ENCODE measurements at regions of chr1 and their contacts with region 1.

Region 1: DNA sequence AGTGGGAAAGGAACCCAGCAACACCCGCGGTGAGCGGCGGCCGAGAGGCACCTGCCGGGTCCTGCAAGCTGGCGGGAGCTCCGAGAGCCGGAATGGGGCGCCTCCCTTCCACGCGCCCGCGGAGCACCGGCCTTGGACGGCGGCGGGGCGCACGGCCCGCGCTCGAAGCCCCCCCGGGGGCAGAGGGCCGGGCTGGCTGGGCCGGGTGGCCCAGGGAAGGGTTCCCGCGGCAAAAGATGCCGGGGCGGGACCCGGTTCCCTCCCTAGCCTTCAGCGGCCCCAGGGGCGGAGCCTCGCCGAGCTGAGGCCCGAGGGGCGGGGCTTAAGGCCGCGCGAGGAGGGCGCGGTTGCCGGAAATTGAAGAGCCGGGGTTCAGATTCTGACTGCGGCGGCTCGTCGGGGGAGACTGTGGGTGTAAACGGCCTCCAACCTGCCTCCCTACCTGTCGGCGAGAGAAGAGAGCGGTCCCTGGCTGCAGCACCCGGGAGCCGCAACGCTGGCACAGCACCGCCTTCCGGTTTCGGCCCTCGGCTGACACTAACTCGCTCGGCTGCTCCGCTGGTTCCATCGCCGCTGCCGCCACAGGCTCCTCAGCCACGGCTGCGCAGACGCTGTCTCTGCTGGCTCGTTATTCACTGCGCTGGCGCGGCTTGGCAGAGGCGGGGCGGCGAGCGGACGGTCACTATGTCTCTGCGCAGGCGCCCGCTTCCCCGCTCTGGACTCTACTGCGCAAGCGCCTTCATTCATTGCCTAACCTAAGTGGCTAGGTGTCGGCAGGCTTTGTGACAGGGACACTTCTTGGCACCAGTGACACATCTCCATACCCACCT is at the start of gene RABIF:
- DNase-seq: peak; percentile 94
- ATAC-seq: peak; percentile 92
- H3K4me3 Mint-ChIP-seq: peak within 1 kb of the TSS; percentile 96
- H3K27ac Mint-ChIP-seq: peak within 1 kb of the TSS; percentile 98
- H3K4me1 Mint-ChIP-seq: peaks cover 16% of the 10 kb centered on the region
- H3K27me3 Mint-ChIP-seq: no peaks in the 10 kb centered on the region
- CTCF ChIP-seq: no peak
- total RNA-seq, gene RABIF: 10.7 and 13.2 TPM in 2 replicates

Region 2: GRCh38 chr1:201149400-201149799 is 1739.3 kb before region 1 on chr1:
- CTCF ChIA-PET with region 1: no interaction called
- POLR2A ChIA-PET with region 1: interaction called, 11 read pairs
- intact Hi-C with region 1: no loop called
- DNase-seq: no peak
- ATAC-seq: no peak
- H3K4me3 Mint-ChIP-seq: no peak overlapping the region
- H3K27ac Mint-ChIP-seq: no peak overlapping the region
- H3K4me1 Mint-ChIP-seq: peaks cover 11% of the 10 kb centered on the region
- H3K27me3 Mint-ChIP-seq: no peaks in the 10 kb centered on the region
- CTCF ChIP-seq: no peak

Region 3: GRCh38 chr1:202810615-202811295 is 78.0 kb before region 1 on chr1 and contains the start of gene PCAT6:
- CTCF ChIA-PET with region 1: no interaction called
- POLR2A ChIA-PET with region 1: interaction called, 10 read pairs
- intact Hi-C with region 1: loop called (anchors 1 kb)
- DNase-seq: peak; percentile 88
- ATAC-seq: peak; percentile 82
- H3K4me3 Mint-ChIP-seq: peak within 1 kb of the TSS; percentile 93
- H3K27ac Mint-ChIP-seq: peak within 1 kb of the TSS; percentile 80
- H3K4me1 Mint-ChIP-seq: peaks cover 36% of the 10 kb centered on the region
- H3K27me3 Mint-ChIP-seq: no peaks in the 10 kb centered on the region
- CTCF ChIP-seq: no peak
- total RNA-seq, gene PCAT6: 0.67 and 0.83 TPM in 2 replicates

Region 4: DNA sequence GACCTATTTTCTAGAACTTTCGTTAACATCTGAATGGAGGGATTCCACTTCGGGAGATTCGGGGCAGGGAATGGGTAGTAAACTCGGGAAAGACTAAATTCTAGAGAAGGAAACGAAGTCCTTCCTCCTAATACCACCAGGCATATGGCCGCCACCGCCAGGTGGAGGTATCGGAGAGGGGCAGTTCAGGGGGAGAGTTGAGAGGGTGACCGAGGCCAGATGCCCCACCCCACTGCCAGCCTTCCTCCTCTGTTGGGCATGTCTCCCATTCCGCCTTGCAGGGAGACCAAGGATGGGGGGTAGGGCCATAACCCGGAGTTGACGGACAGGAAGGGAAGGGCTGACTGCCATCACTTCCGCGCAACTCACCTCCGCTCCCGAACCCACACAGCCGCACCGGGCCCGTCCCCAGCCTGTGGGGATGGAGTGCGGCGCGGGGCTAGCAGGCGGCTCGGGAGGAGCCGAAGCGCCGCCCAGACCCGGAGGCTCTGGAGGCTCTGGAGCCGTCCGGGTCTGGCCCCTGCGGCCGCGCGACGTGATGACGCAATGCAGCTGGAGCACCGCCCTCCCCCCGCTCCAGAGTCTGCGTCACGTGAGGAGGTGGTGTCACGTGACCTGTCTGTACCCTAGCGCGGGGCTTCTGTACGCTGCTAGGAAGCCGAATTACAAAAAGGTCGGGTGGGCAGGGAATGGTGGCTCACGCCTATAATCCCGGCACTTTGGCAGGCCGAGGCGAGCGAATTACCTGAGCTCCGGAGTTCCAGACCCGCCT is 38.2 kb after region 1 on chr1 and contains the start of gene KLHL12:
- CTCF ChIA-PET with region 1: no interaction called
- POLR2A ChIA-PET with region 1: no interaction called
- intact Hi-C with region 1: loop called (anchors 1 kb)
- DNase-seq: peak; percentile 92
- ATAC-seq: peak; percentile 93
- H3K4me3 Mint-ChIP-seq: peak within 1 kb of the TSS; percentile 94
- H3K27ac Mint-ChIP-seq: peak within 1 kb of the TSS; percentile 92
- H3K4me1 Mint-ChIP-seq: peaks cover 24% of the 10 kb centered on the region
- H3K27me3 Mint-ChIP-seq: no peaks in the 10 kb centered on the region
- CTCF ChIP-seq: no peak
- total RNA-seq, gene KLHL12: 30.4 and 30.8 TPM in 2 replicates

Region 5: GRCh38 chr1:202945483-202945882 is 56.7 kb after region 1 on chr1:
- CTCF ChIA-PET with region 1: no interaction called
- POLR2A ChIA-PET with region 1: no interaction called
- intact Hi-C with region 1: no loop called
- DNase-seq: no peak
- ATAC-seq: no peak
- H3K4me3 Mint-ChIP-seq: no peak overlapping the region
- H3K27ac Mint-ChIP-seq: no peak overlapping the region
- H3K4me1 Mint-ChIP-seq: no peaks in the 10 kb centered on the region
- H3K27me3 Mint-ChIP-seq: no peaks in the 10 kb centered on the region
- CTCF ChIP-seq: no peak

Region 6: DNA sequence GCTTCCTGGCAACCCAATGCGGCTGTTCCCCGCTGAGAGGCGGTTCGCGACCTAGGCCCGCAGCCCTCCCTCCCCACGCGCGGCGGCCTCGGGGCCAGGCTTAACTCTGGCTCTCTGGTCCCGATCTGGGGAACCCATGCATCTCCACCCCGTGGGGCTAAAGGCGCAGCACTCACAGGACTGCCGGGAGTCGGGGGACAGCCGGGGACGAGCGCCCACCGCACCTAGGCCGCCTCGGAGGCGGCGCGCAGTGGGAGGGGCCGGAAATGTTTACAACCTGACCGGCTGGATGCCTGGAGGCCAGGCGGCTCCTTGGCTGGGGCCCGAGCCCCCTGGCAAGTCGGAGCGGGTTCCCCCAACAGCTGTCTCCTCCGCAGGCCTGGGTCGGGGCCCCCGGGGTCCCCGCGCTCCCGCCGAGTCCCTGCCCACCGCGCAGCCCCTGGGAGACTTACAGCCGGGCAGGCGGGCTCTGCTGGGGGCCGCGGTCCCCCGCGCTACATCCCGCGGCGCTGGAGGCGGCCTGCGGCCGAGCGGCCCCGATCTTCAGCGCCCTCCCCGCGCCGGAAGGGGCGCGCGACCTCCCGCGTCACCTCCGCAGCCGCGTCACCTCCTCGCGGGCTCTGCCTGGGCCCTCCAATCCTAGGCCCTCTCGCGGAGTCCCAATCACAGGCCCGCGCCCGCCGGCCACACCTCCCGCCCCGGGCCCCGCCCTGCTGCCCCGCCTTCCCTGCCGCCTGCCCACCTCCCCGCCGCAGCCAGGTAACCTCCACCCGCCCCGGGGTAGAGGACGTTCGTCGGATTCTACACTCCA is 69.2 kb after region 1 on chr1 and contains the start of gene ADIPOR1:
- CTCF ChIA-PET with region 1: no interaction called
- POLR2A ChIA-PET with region 1: interaction called, 4 read pairs
- intact Hi-C with region 1: loop called (anchors 2 kb)
- DNase-seq: peak; percentile 92
- ATAC-seq: peak; percentile 99
- H3K4me3 Mint-ChIP-seq: peak within 1 kb of the TSS; percentile 90
- H3K27ac Mint-ChIP-seq: peak within 1 kb of the TSS; percentile 86
- H3K4me1 Mint-ChIP-seq: peaks cover 34% of the 10 kb centered on the region
- H3K27me3 Mint-ChIP-seq: no peaks in the 10 kb centered on the region
- CTCF ChIP-seq: no peak
- total RNA-seq, gene ADIPOR1: 44.4 and 45.0 TPM in 2 replicates

Region 7: DNA sequence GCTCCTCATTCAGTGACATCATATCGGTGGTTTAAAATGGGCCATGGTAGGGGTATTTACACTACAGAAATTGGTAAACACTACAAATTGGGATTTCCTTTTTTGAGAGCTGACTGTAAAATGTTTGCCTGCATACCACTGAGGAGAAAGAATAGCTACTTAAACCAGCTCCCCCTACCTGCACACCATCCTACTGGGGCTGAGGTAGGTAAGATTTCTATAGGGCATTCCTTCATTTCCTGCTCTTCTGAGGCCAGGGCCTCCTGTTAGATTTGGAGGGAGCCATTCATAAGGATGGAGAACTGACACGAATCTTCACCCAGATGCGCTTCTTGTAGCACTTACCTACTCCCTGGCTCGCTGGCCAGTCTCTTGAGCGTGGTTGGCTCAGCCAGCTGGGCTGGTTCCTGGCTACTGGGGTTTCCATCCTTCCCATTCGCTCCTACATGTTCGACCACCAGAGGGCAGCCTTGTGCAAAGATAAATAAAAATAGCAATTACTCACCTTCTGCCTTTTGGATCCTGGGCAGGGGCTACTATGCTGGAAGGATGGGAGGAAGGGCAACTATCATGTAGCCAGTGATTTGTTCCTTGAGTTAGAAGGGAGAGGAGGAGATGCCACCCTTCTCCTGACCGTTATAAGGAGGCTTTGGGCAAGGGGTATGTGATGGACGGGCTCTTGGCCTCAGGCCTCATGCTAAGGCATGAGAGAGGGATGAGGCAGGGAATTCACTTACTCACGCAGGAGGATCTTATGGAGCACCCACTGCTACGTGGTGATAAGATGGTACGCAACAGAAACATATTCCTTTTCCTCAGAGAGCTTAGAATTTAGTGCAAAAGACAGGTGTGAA is 615.9 kb after region 1 on chr1:
- CTCF ChIA-PET with region 1: no interaction called
- POLR2A ChIA-PET with region 1: no interaction called
- intact Hi-C with region 1: no loop called
- DNase-seq: peak; percentile 45
- ATAC-seq: peak; percentile 57
- H3K4me3 Mint-ChIP-seq: no peak overlapping the region
- H3K27ac Mint-ChIP-seq: peak overlapping the region; percentile 10
- H3K4me1 Mint-ChIP-seq: peaks cover 2% of the 10 kb centered on the region
- H3K27me3 Mint-ChIP-seq: peaks cover 12% of the 10 kb centered on the region
- CTCF ChIP-seq: peak; percentile 83

Region 8: DNA sequence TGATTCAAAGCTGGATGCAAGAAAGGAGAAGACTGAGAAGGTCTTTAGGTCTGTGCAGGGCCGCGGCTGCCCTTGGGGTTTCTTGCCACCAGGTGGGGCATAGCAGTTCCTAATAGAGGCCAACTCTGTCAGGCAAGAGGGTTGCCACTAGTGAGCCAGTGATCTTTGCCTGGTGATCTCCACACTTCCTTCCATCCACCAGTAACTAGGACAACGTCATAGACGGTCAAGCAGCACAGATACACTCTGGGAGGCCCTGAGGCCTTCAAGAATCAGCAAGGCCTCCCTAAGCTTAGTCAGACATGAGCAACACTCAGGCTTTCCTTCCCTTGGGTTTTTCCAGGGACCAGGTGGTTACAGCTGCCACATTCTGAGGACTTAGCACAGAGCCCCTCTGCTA is 705.0 kb after region 1 on chr1:
- CTCF ChIA-PET with region 1: no interaction called
- POLR2A ChIA-PET with region 1: no interaction called
- intact Hi-C with region 1: no loop called
- DNase-seq: peak; percentile 23
- ATAC-seq: peak; percentile 42
- H3K4me3 Mint-ChIP-seq: no peak overlapping the region
- H3K27ac Mint-ChIP-seq: no peak overlapping the region
- H3K4me1 Mint-ChIP-seq: no peaks in the 10 kb centered on the region
- H3K27me3 Mint-ChIP-seq: peaks cover 2% of the 10 kb centered on the region
- CTCF ChIP-seq: no peak

Measured in activated B cell treated with CpG ODN at 0.5 μM for 24 hours (primary cell).